ENCODE measurements at regions of chr7 and their contacts with region 1.

Region 1: GRCh38 chr7:92134271-92135051 is at the start of gene CYP51A1:
- DNase-seq: peak; percentile 76
- ATAC-seq: peak; percentile 90
- H3K4me3 ChIP-seq: peak within 1 kb of the TSS; percentile 79
- H3K27ac ChIP-seq: peak within 1 kb of the TSS; percentile 99
- H3K4me1 ChIP-seq: peaks cover 3% of the 10 kb centered on the region; the same call in 1 of the 2 replicates
- H3K27me3 ChIP-seq: no peaks in the 10 kb centered on the region
- CTCF ChIP-seq: no peak; a peak in 1 of 6 replicates
- EP300 ChIP-seq: 0 out of 4 replicates have a peak, but pooled peaks of 1 of the 2 experiments have one; percentile 37
- POLR2A ChIP-seq: peak; percentile 87
- RAD21 ChIP-seq: no peak
- polyA plus RNA-seq, gene CYP51A1: 28.1 to 33.1 TPM

Region 2: DNA sequence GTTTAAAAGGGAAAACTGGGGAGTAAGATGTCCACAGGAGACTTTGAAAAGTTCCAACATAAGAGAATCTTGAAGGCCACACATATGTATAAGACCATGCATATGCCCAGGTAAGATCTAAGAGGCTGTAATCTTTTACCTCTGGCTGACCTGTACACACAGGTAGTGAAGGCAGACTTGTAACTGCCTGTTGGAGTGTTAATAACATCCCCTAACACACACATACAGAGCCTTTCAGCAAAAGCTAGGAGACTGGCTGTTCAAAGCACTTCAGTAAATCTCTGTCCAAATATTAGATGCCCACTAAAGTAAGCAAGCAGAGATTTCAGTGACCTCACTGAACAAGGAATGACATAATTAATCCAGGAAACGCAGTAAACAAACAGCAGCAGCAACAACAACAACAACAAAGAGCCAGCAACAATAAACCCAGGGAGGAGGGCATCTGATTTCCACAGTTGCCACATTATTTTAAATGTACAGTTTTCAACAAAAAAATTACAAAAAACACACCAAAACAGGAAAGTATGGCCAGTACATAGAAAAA is 15.2 kb before region 1 on chr7:
- CTCF ChIA-PET with region 1: interaction called, 4 read pairs
- POLR2A ChIA-PET with region 1: interaction called, 4 read pairs
- RAD21 ChIA-PET with region 1: interaction called, 4 read pairs
- SMC1A ChIA-PET with region 1: interaction called, 11 read pairs
- in situ Hi-C with region 1: no loop called
- intact Hi-C with region 1: no loop called
- DNase-seq: no peak
- ATAC-seq: no peak; the same call in 1 of the 3 replicates
- H3K4me3 ChIP-seq: no peak overlapping the region
- H3K27ac ChIP-seq: no peak overlapping the region
- H3K4me1 ChIP-seq: no peaks in the 10 kb centered on the region
- H3K27me3 ChIP-seq: no peaks in the 10 kb centered on the region
- CTCF ChIP-seq: no peak
- EP300 ChIP-seq: no peak
- POLR2A ChIP-seq: no peak
- RAD21 ChIP-seq: no peak

Region 3: GRCh38 chr7:92200791-92201190 is 66.3 kb after region 1 on chr7:
- CTCF ChIA-PET with region 1: no interaction called
- POLR2A ChIA-PET with region 1: no interaction called
- RAD21 ChIA-PET with region 1: no interaction called
- SMC1A ChIA-PET with region 1: no interaction called
- in situ Hi-C with region 1: no loop called
- intact Hi-C with region 1: no loop called
- DNase-seq: no peak
- ATAC-seq: no peak
- H3K4me3 ChIP-seq: no peak overlapping the region
- H3K27ac ChIP-seq: no peak overlapping the region
- H3K4me1 ChIP-seq: no peaks in the 10 kb centered on the region
- H3K27me3 ChIP-seq: no peaks in the 10 kb centered on the region
- CTCF ChIP-seq: peak in 1 of 3 experiments; percentile 21; a peak in 1 of 6 replicates
- EP300 ChIP-seq: no peak
- POLR2A ChIP-seq: no peak
- RAD21 ChIP-seq: no peak

Region 4: GRCh38 chr7:92245487-92246362 is 111.3 kb after region 1 on chr7 and contains the starts of genes ANKIB1 and KRIT1:
- CTCF ChIA-PET with region 1: interaction called, 4 read pairs
- POLR2A ChIA-PET with region 1: interaction called, 9 read pairs
- RAD21 ChIA-PET with region 1: interaction called, 5 read pairs
- SMC1A ChIA-PET with region 1: interaction called, 5 read pairs
- in situ Hi-C with region 1: no loop called
- intact Hi-C with region 1: loop called (anchors 5 kb)
- DNase-seq: peak; percentile 51
- ATAC-seq: peak; percentile 84
- H3K4me3 ChIP-seq: peak within 1 kb of the TSS; percentile 93
- H3K27ac ChIP-seq: peak within 1 kb of the TSS; percentile 90
- H3K4me1 ChIP-seq: no peaks in the 10 kb centered on the region
- H3K27me3 ChIP-seq: no peaks in the 10 kb centered on the region
- CTCF ChIP-seq: peak; percentile 2 to 16 (median 13); a peak in 3 of 6 replicates
- EP300 ChIP-seq: no peak
- POLR2A ChIP-seq: peak; percentile 90
- RAD21 ChIP-seq: no peak
- polyA plus RNA-seq, gene ANKIB1: 9.7 to 14.6 TPM
- polyA plus RNA-seq, gene KRIT1: 12.0 to 12.8 TPM